AG04450 (cell line): ENCODE measurements at regions of chr6 and their contacts with region 1.

Region 1: GRCh38 chr6:140153703-140154102 is 779.3 kb upstream of the CITED2 start:
- DNase-seq: no peak
- H3K4me3 ChIP-seq: no peak overlapping the region
- H3K27ac ChIP-seq: no peak overlapping the region
- H3K27me3 ChIP-seq: no peaks in the 10 kb centered on the region
- CTCF ChIP-seq: no peak

Region 2: GRCh38 chr6:140344142-140344913 is 190.6 kb after region 1 on chr6:
- CTCF ChIA-PET with region 1: no interaction called
- POLR2A ChIA-PET with region 1: interaction called, 10 read pairs
- DNase-seq: no peak
- H3K4me3 ChIP-seq: no peak overlapping the region
- H3K27ac ChIP-seq: no peak overlapping the region
- H3K27me3 ChIP-seq: no peaks in the 10 kb centered on the region
- CTCF ChIP-seq: no peak